Head of caudate nucleus (tissue), 42 donors: ENCODE measurements at regions of chr3 and their contacts with region 1.

Region 1: GRCh38 chr3:35965908-35966307 is 326.6 kb downstream of the ARPP21 start:
- DNase-seq: peak in 15 of 42 donors; percentile 10 to 68 (median 41)

Region 2: GRCh38 chr3:35537265-35537664 is 428.6 kb before region 1 on chr3:
- intact Hi-C with region 1: no loop called
- DNase-seq: peak in 3 of 42 donors; percentile 3 to 44 (median 43)

Region 3: DNA sequence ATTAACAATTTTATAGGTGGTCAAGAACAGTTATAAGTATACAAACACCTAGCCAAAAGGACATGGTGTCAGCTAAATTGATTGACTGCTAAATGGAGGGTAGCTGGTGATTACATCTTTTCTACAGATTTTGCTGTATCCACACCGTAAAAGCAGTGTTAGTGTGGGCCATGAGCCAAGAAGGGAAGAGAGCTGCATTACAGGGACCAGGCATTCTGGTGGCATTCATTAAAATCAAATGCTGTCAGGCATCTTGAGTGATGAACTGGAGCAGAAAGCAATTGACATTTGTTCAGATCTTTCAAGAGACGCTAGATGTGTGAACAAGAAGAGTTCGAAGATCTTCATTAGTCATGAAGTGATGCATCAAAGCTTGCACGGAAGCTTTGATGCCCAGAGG is 148.7 kb before region 1 on chr3:
- intact Hi-C with region 1: no loop called
- DNase-seq: no peak

Region 4: GRCh38 chr3:36075491-36075890 is 109.6 kb after region 1 on chr3:
- intact Hi-C with region 1: no loop called
- DNase-seq: no peak

Region 5: GRCh38 chr3:36700537-36701248 is 734.8 kb after region 1 on chr3:
- intact Hi-C with region 1: loop called (anchors 5 kb)
- DNase-seq: peak; percentile 50 to 82 (median 67)